CD14-positive monocyte (primary cell): ENCODE measurements at regions of chr1 and their contacts with region 1.

Region 1: GRCh38 chr1:9942939-9943788 is at the starts of genes LZIC and NMNAT1:
- DNase-seq: peak; percentile 91 to 93 (median 92)
- H3K4me3 ChIP-seq: peak within 1 kb of the TSS; percentile 83 to 96 (median 96)
- H3K4me3 Mint-ChIP-seq: peak within 1 kb of the TSS; percentile 96 to 98
- H3K27ac ChIP-seq: peak within 1 kb of the TSS; percentile 85 to 95
- H3K27ac Mint-ChIP-seq: peak within 1 kb of the TSS; percentile 96 to 100 (median 97)
- H3K4me1 ChIP-seq: peaks cover 16 to 23% of the 10 kb centered on the region in 2 donors
- H3K4me1 Mint-ChIP-seq: peaks cover 22% of the 10 kb centered on the region
- H3K27me3 ChIP-seq: no peaks in the 10 kb centered on the region
- H3K27me3 Mint-ChIP-seq: peaks cover 0 to 4% (median 0%) of the 10 kb centered on the region in 3 donors
- CTCF ChIP-seq: no peak
- polyA plus RNA-seq, gene LZIC: 11.1 to 32.9 (median 28.2) TPM
- polyA plus RNA-seq, gene NMNAT1: 6.8 to 9.9 (median 7.1) TPM

Region 2: DNA sequence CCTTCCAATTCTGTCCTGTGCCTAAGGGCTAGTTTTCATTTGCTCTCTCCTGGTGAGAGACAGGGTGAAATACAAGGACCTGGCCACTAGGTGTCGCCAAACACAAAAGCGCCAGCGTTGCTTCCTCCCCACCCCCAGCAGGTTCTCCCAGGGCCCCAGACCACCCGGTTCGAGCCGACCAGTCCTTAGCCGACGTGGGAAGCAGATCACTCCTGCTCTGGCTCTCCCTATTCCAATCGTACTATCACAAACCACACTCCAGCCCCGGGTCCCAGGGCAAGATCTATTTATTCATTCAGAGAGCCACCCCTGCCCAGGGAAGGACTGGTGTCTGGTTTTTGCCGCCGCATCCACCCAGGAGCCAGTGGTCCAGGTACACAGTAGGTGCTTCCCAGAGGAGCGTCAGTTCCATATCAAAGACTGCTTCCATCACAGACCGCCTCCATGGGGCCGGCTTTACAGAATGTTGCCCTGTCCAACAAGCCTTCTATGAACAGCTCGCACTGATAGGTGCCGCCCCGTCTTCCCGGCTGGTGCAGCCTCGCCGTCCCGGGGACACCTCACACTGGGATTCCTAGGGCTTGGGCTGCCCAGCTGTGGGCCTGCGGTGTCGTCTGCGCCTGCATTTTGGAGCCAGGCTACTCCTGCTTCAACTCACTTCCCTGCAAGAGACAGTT is 68.1 kb before region 1 on chr1:
- intact Hi-C with region 1: loop called (anchors 2 to 5 kb)
- DNase-seq: peak; percentile 59 to 78 (median 74)
- H3K4me3 ChIP-seq: peak overlapping the region in 1 of 3 experiments; percentile 15
- H3K4me3 Mint-ChIP-seq: peak overlapping the region in 1 of 2 donors; percentile 41
- H3K27ac ChIP-seq: peak overlapping the region in 1 of 2 donors; percentile 26
- H3K27ac Mint-ChIP-seq: peak overlapping the region in 4 of 7 donors; percentile 63 to 84 (median 73)
- H3K4me1 ChIP-seq: peaks cover 5 to 6% of the 10 kb centered on the region in 2 donors
- H3K4me1 Mint-ChIP-seq: peaks cover 7% of the 10 kb centered on the region
- H3K27me3 ChIP-seq: no peaks in the 10 kb centered on the region
- H3K27me3 Mint-ChIP-seq: peaks cover 0 to 4% (median 0%) of the 10 kb centered on the region in 3 donors
- CTCF ChIP-seq: peak; percentile 90

Region 3: DNA sequence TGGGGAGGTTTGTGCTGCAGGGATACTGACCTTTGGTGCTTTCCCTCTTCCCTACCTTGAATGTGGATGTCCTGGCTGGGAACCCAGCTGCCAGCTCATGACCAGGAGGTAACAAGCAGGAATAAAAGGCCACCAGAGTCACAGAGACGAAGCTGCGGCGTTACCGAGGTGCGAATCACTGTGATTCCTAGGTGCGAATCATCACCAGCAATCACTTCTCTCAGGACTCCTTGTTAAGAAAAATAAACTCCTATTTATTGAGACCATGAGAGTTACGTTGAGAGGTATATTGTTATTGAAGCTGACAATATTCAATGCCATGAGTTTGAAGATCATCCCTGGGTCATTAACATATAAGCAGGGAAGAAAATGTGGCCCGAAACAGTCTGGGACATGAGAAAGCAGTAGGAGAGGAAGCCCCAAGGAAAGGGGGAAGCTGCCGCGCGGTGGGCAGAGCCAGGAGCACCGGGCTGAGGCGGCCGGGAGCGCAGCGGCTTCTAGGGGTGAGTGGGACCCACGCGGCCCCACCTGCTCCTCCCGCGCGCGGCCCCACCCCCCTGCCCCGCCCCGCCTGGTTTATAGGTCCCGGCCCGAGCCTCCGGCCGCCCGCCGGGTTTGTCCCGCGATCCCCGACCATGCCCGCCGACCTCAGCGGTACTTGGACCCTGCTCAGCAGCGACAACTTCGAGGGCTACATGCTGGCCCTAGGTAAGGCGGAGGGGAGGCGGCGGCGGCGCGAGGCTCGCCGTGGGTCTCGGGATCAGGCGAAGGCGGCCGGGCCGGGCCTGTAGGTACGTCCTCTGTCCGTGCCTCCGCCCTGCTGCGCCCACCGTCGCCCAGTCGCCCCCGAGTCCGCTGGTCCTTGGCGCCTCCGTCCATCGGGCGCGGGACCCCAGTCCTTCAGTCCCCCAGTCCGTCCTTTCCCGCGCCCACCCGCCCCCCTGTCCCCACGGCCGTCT is 53.7 kb after region 1 on chr1 and contains the start of gene RBP7:
- intact Hi-C with region 1: loop called in 1 of 2 experiments (anchors 10 kb)
- DNase-seq: peak; percentile 27 to 64 (median 54)
- H3K4me3 ChIP-seq: peak within 1 kb of the TSS; percentile 47 to 82 (median 73)
- H3K4me3 Mint-ChIP-seq: peak within 1 kb of the TSS; percentile 91 to 94
- H3K27ac ChIP-seq: peak within 1 kb of the TSS in 1 of 2 donors; percentile 31
- H3K27ac Mint-ChIP-seq: peak within 1 kb of the TSS; percentile 15 to 80 (median 63)
- H3K4me1 ChIP-seq: peaks cover 37 to 44% of the 10 kb centered on the region in 2 donors
- H3K4me1 Mint-ChIP-seq: peaks cover 41% of the 10 kb centered on the region
- H3K27me3 ChIP-seq: peaks cover 0 to 11% of the 10 kb centered on the region in 2 donors
- H3K27me3 Mint-ChIP-seq: peaks cover 15 to 46% (median 35%) of the 10 kb centered on the region in 3 donors
- CTCF ChIP-seq: no peak
- polyA plus RNA-seq, gene RBP7: 116 to 340 (median 306) TPM

Region 4: DNA sequence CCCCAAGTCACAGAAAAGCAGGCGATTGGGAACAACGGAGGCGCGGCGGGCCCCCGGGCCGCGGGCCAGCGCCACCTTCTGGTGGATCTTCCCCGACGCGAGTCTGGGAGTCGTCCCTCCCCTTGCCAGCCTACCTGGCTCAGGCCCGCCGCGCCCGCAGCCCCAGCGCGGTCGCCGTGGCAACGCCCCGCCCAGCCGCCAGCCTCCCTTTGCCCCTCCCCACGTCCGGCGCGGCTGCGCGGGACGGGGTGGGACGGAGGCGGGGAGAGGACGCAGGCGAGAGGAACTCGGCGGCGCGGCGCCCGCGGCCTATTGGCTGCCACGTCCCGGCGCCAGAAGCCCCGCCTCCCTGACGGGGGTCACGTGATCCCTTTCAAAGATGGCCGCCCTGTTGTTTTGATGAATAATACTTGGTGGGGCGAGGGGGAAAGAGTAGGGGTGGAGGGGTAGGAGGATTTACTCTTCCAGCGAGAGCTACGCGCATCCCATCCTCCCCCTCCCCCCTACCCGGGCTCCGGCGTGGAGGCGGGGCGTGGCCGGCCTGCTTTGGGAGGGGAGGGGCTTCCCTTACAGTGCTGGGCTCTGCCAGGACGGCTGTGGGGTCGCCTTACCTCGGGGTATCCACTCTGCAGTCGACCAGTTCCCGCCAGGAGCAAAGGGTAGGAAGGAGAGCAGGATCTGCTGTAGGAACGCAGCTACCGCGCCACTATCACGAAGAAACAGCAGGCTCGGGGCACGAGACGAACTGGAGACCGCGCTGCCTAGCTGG is 89.6 kb after region 1 on chr1 and contains the start of gene UBE4B:
- intact Hi-C with region 1: loop called (anchors 2 to 5 kb)
- DNase-seq: peak; percentile 98 to 99 (median 98)
- H3K4me3 ChIP-seq: peak within 1 kb of the TSS; percentile 70 to 100 (median 94)
- H3K4me3 Mint-ChIP-seq: peak within 1 kb of the TSS; percentile 95 to 96
- H3K27ac ChIP-seq: peak within 1 kb of the TSS; percentile 87 to 96
- H3K27ac Mint-ChIP-seq: peak within 1 kb of the TSS; percentile 91 to 96 (median 96)
- H3K4me1 ChIP-seq: peaks cover 30 to 45% of the 10 kb centered on the region in 2 donors
- H3K4me1 Mint-ChIP-seq: peaks cover 43% of the 10 kb centered on the region
- H3K27me3 ChIP-seq: no peaks in the 10 kb centered on the region
- H3K27me3 Mint-ChIP-seq: no peaks in the 10 kb centered on the region
- CTCF ChIP-seq: peak; percentile 71
- polyA plus RNA-seq, gene UBE4B: 6.0 to 34.6 (median 9.2) TPM

Region 5: DNA sequence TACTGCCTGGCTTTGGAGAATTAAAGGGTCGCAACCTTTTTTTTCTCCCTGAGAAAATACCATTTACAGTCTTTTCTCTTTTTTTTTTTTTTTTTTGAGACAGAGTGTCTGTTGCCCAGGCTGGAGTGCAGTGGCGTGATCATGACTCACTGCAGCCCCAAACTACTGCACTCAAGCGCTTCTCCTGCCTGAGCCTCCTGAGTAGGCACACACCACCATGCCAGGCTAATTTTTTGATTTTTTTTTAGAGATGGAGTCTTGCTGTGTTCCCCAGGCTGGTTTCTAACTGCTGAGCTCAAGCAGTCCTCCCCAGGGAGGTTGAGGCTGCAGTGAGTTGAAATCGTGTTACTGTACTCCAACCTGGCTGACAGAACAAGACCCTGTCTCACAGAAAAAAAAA is 114.2 kb after region 1 on chr1:
- intact Hi-C with region 1: no loop called
- DNase-seq: peak in 1 of 3 donors; percentile 23
- H3K4me3 ChIP-seq: no peak overlapping the region
- H3K4me3 Mint-ChIP-seq: no peak overlapping the region
- H3K27ac ChIP-seq: peak overlapping the region in 1 of 2 donors; percentile 2
- H3K27ac Mint-ChIP-seq: peak overlapping the region in 3 of 7 donors; percentile 58 to 74 (median 63)
- H3K4me1 ChIP-seq: peaks cover 19 to 20% of the 10 kb centered on the region in 2 donors
- H3K4me1 Mint-ChIP-seq: peaks cover 29% of the 10 kb centered on the region
- H3K27me3 ChIP-seq: no peaks in the 10 kb centered on the region
- H3K27me3 Mint-ChIP-seq: no peaks in the 10 kb centered on the region
- CTCF ChIP-seq: no peak